ENCODE measurements at regions of chr20 and their contacts with region 1.

Region 1: GRCh38 chr20:44552950-44553908 is 29.1 kb upstream of the PKIG start:
- DNase-seq: peak; percentile 71
- H3K4me3 Mint-ChIP-seq: no peak overlapping the region
- H3K27ac Mint-ChIP-seq: peak overlapping the region; percentile 81
- H3K4me1 Mint-ChIP-seq: peaks cover 22% of the 10 kb centered on the region
- H3K27me3 Mint-ChIP-seq: no peaks in the 10 kb centered on the region
- CTCF ChIP-seq: no peak

Region 2: GRCh38 chr20:44392776-44393607 is 160.2 kb before region 1 on chr20:
- CTCF ChIA-PET with region 1: no interaction called
- POLR2A ChIA-PET with region 1: no interaction called
- intact Hi-C with region 1: no loop called
- DNase-seq: no peak
- H3K4me3 Mint-ChIP-seq: no peak overlapping the region
- H3K27ac Mint-ChIP-seq: no peak overlapping the region
- H3K4me1 Mint-ChIP-seq: peaks cover 17% of the 10 kb centered on the region
- H3K27me3 Mint-ChIP-seq: no peaks in the 10 kb centered on the region
- CTCF ChIP-seq: no peak

Region 3: DNA sequence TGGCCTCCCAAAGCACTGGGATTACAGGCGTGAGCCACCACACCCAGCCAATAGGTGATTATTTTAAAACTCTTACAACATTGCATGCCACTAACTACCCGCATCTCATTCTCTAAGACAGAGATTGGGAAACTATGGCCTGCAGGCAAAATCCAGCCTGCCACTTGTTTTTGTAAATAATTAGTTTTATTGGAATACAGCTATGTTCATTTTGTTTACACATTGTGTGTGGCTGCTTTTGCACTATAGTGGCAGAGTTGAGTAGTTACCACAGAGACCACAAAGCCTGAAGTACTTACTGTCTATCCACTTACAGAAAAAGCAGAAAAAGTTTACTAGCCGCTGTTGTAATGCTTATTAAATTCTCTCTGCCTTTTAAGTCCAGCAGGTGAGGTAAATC is 12.8 kb after region 1 on chr20:
- CTCF ChIA-PET with region 1: interaction called, 9 read pairs
- POLR2A ChIA-PET with region 1: interaction called, 30 read pairs
- intact Hi-C with region 1: no loop called
- DNase-seq: peak; percentile 17
- H3K4me3 Mint-ChIP-seq: no peak overlapping the region
- H3K27ac Mint-ChIP-seq: no peak overlapping the region
- H3K4me1 Mint-ChIP-seq: peaks cover 9% of the 10 kb centered on the region
- H3K27me3 Mint-ChIP-seq: no peaks in the 10 kb centered on the region
- CTCF ChIP-seq: no peak